Activated T-helper 2 cell treated with anti-CD3 and anti-CD28 coated beads, Interferon-gamma antibody, Interleukin-2, Interleukin-4, amounts not matched to agents 10 μg/mL and 5 μg/mL and 100 μg/mL, durations not matched to agents 14 hours and 24 hours and 36 hours (primary cell): ENCODE measurements at regions of chr3 and their contacts with region 1.

Region 1: GRCh38 chr3:187000711-187001151 is 70.4 kb downstream of the ST6GAL1 start:
- DNase-seq: no peak
- H3K4me3 Mint-ChIP-seq: peak overlapping the region; percentile 10
- H3K27ac Mint-ChIP-seq: peak overlapping the region; percentile 73
- H3K4me1 Mint-ChIP-seq: peaks cover 66% of the 10 kb centered on the region
- H3K27me3 Mint-ChIP-seq: no peaks in the 10 kb centered on the region

Region 2: DNA sequence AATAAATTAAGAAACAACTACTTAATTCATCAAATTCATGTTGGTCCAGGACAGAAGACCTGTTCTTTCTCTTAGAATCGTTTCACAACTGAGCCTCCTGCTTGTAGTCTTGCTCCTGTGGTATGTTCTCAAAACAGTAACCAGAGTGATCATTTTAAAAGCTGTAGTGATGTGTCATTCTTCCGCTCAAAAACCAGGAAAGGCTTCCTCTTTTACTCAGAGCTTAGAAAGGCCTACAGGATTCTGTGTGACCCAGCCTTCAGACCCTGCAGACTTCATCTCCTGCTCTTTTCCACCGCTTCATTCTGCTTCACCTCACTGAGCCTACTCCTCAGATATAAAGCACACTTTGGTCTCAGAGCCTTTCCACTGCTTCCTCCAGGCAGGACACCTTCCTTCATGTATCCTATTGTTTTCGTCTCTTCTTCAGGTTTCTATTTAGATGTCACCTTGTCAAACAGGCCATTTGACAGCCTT is 47.7 kb before region 1 on chr3:
- intact Hi-C with region 1: loop called (anchors 2 kb)
- DNase-seq: no peak
- H3K4me3 Mint-ChIP-seq: peak overlapping the region; percentile 27
- H3K27ac Mint-ChIP-seq: peak overlapping the region; percentile 74
- H3K4me1 Mint-ChIP-seq: peaks cover 66% of the 10 kb centered on the region
- H3K27me3 Mint-ChIP-seq: no peaks in the 10 kb centered on the region

Region 3: DNA sequence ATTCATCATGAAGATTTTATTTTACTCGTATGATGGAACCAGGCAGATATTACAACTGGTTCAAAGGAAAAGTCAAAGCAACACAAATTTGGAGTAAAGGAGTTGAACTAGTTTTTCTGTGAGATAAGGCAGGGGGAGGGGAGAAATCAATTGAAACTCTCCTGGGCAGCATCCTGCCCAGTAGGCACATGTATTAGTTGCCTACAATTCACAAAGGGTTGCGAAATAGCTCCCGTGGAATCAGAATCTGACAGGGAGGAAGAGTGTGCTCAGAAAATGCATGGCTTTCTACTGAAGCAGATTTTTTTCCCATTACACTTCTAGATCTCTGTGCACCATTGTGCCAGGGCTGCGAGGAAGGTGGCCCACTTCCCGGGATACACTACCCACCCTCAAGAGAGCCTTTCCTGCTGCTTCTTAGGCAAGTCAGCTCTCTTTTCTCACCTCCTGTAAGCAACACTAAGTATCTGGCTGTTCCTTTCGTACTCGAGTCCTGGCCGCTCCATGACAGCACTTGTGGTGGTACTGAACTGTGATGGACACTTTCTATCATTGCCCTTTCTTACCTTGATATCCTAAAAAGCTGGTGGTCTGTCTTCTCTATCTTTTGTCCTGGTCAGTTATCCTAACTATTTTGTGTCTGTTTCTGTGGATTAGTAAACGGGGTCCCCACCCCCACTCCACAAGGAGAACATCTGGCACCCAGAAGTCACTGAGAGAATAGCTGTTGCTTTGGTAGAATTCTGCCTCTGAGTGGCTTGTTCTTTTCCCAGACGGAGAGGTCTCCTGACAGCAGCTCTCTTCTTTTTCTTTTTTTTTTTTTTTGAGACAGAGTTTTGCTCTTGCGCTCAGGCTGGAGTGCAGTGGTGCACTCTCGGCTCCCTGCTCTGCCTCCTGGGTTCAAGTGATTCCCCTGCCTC is 63.7 kb after region 1 on chr3:
- intact Hi-C with region 1: loop called (anchors 1 kb)
- DNase-seq: no peak
- H3K4me3 Mint-ChIP-seq: no peak overlapping the region
- H3K27ac Mint-ChIP-seq: peak overlapping the region; percentile 70
- H3K4me1 Mint-ChIP-seq: peaks cover 52% of the 10 kb centered on the region
- H3K27me3 Mint-ChIP-seq: no peaks in the 10 kb centered on the region